Naive thymus-derived CD4-positive, alpha-beta T cell (primary cell): ENCODE measurements at regions of chr20 and their contacts with region 1.

Region 1: GRCh38 chr20:3470627-3471396 is at the start of gene ATRN:
- DNase-seq: peak; percentile 72 to 96 (median 80)
- ATAC-seq: peak; percentile 98
- H3K4me3 ChIP-seq: peak within 1 kb of the TSS; percentile 89
- H3K4me3 Mint-ChIP-seq: peak within 1 kb of the TSS; percentile 89 to 97 (median 96)
- H3K27ac ChIP-seq: peak within 1 kb of the TSS; percentile 79
- H3K27ac Mint-ChIP-seq: peak within 1 kb of the TSS; percentile 69 to 96 (median 86)
- H3K4me1 ChIP-seq: peaks cover 21 to 26% of the 10 kb centered on the region in 2 donors
- H3K4me1 Mint-ChIP-seq: peaks cover 26 to 43% (median 34%) of the 10 kb centered on the region in 7 donors
- H3K27me3 ChIP-seq: no peaks in the 10 kb centered on the region
- H3K27me3 Mint-ChIP-seq: peaks cover 0 to 15% (median 0%) of the 10 kb centered on the region in 5 donors
- total RNA-seq, gene ATRN: 12.4 to 17.5 (median 13.0) TPM

Region 2: DNA sequence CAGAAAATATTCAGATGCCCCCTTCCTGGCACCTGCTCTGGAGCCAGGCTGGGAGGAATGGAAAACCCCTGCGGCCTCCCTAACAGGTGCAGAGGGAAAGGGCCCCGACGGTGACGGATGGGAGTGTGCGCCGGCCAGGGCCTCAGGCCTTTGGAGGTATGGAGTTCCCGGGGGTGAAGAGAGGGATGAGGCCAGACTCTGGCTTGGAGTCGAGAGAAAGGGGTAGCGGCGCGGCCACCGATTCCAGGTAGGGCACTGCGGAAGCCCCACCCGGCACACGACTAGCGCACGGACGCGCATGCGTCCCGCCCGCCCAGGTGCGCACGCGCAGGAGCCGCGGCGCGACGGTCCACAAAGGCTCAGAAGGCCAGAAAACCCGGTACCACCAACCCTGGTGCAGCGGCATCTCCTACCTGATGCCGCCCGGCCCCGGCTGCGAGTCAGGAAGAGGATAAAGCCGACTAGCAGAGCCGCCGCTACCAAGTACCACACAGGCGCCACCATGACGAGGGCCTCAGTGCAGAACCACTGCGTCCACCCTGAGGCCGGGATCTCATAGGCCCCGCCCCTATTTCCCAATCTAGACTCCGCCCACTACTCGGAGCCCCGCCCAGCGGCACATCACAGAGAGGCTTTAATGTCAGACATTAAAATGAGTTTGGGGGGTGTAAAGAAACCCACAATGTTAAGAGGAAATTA is 266.5 kb before region 1 on chr20 and contains the start of gene DDRGK1:
- CTCF ChIA-PET with region 1: no interaction called
- POLR2A ChIA-PET with region 1: no interaction called
- intact Hi-C with region 1: loop called in 1 of 2 experiments (anchors 10 kb)
- DNase-seq: peak; percentile 79 to 95 (median 90)
- ATAC-seq: peak; percentile 96
- H3K4me3 ChIP-seq: peak within 1 kb of the TSS; percentile 99
- H3K4me3 Mint-ChIP-seq: peak within 1 kb of the TSS; percentile 91 to 97 (median 95)
- H3K27ac ChIP-seq: peak within 1 kb of the TSS; percentile 91
- H3K27ac Mint-ChIP-seq: peak within 1 kb of the TSS; percentile 91 to 98 (median 96)
- H3K4me1 ChIP-seq: peaks cover 12 to 18% of the 10 kb centered on the region in 2 donors
- H3K4me1 Mint-ChIP-seq: peaks cover 21 to 26% (median 22%) of the 10 kb centered on the region in 7 donors
- H3K27me3 ChIP-seq: no peaks in the 10 kb centered on the region
- H3K27me3 Mint-ChIP-seq: no peaks in the 10 kb centered on the region
- total RNA-seq, gene DDRGK1: 39.4 to 60.3 (median 46.6) TPM

Region 3: DNA sequence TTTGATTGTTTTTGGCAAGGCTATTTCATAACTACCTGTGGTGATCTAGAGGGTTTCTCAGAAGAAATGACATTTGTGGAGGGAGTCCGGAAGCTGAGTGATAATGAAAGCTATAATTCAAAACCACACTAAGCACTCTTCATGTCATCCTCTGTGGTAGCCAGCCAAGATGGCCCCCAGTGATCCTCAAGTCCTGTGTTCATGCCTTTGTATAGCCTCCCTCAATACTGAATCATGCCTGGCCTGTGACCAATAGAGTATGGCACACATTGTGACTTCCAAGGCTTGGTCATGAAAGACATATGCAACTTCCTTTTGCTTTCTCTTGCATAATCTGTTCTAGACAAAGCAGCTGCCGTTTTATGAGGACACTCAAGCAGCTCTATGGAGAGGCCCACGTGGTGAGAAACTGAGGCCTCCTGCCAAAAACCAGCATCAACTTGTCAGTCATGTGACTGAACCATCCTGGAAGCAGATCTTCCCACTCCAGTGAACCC is 50.6 kb before region 1 on chr20:
- CTCF ChIA-PET with region 1: no interaction called
- POLR2A ChIA-PET with region 1: no interaction called
- intact Hi-C with region 1: loop called in 1 of 2 experiments (anchors 2 kb)
- DNase-seq: peak in 3 of 9 donors; percentile 5 to 42 (median 9)
- ATAC-seq: peak; percentile 99
- H3K4me3 ChIP-seq: peak overlapping the region; percentile 9
- H3K4me3 Mint-ChIP-seq: peak overlapping the region in 2 of 10 donors; percentile 4 to 74
- H3K27ac ChIP-seq: no peak overlapping the region
- H3K27ac Mint-ChIP-seq: peak overlapping the region in 1 of 9 donors; percentile 83
- H3K4me1 ChIP-seq: peaks cover 0 to 9% of the 10 kb centered on the region in 2 donors
- H3K4me1 Mint-ChIP-seq: peaks cover 0 to 12% (median 6%) of the 10 kb centered on the region in 7 donors
- H3K27me3 ChIP-seq: no peaks in the 10 kb centered on the region
- H3K27me3 Mint-ChIP-seq: peaks cover 0 to 16% (median 6%) of the 10 kb centered on the region in 5 donors

Region 4: DNA sequence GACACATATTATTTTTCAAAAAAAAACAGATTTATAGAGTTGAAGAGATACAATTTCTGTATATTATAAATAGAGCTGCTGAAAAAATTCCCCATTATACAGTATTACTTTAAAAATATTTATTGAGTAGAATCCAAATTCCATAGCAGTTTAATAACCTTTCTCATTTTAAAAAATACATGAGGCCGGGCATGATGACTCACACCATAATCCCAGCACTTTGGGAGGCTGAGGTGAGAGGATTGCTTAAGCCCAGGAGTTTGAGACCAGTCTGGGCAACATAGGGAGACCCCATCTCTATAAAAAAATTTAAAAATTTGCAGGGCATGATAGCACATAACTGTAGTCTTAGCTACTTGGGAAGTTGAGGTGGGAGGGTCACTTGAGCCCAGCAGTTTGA is 13.0 kb after region 1 on chr20:
- CTCF ChIA-PET with region 1: no interaction called
- POLR2A ChIA-PET with region 1: no interaction called
- intact Hi-C with region 1: no loop called
- DNase-seq: no peak
- ATAC-seq: no peak
- H3K4me3 ChIP-seq: no peak overlapping the region
- H3K4me3 Mint-ChIP-seq: no peak overlapping the region
- H3K27ac ChIP-seq: no peak overlapping the region
- H3K27ac Mint-ChIP-seq: peak overlapping the region in 1 of 9 donors; percentile 38
- H3K4me1 ChIP-seq: no peaks in the 10 kb centered on the region
- H3K4me1 Mint-ChIP-seq: peaks cover 0 to 57% (median 34%) of the 10 kb centered on the region in 7 donors
- H3K27me3 ChIP-seq: no peaks in the 10 kb centered on the region
- H3K27me3 Mint-ChIP-seq: no peaks in the 10 kb centered on the region